Dendritic cell treated with granulocyte-macrophage colony-stimulating factor and Interleukin-4, amounts not matched to agents 40 ng/mL and 50 ng/mL, for 4 days (primary cell): ENCODE measurements at regions of chr5 and their contacts with region 1.

Region 1: GRCh38 chr5:79684782-79685181 is 4.9 kb upstream of the CMYA5 start:
- H3K4me3 Mint-ChIP-seq: no peak overlapping the region
- H3K27ac Mint-ChIP-seq: no peak overlapping the region
- H3K4me1 Mint-ChIP-seq: no peaks in the 10 kb centered on the region
- H3K27me3 Mint-ChIP-seq: no peaks in the 10 kb centered on the region

Region 2: GRCh38 chr5:79628811-79629210 is 56.0 kb before region 1 on chr5:
- intact Hi-C with region 1: loop called (anchors 5 kb)
- H3K4me3 Mint-ChIP-seq: no peak overlapping the region
- H3K27ac Mint-ChIP-seq: no peak overlapping the region
- H3K4me1 Mint-ChIP-seq: peaks cover 24% of the 10 kb centered on the region
- H3K27me3 Mint-ChIP-seq: no peaks in the 10 kb centered on the region

Region 3: GRCh38 chr5:79642212-79642611 is 42.6 kb before region 1 on chr5:
- intact Hi-C with region 1: loop called (anchors 5 kb)
- H3K4me3 Mint-ChIP-seq: no peak overlapping the region
- H3K27ac Mint-ChIP-seq: no peak overlapping the region
- H3K4me1 Mint-ChIP-seq: peaks cover 24% of the 10 kb centered on the region
- H3K27me3 Mint-ChIP-seq: no peaks in the 10 kb centered on the region

Region 4: DNA sequence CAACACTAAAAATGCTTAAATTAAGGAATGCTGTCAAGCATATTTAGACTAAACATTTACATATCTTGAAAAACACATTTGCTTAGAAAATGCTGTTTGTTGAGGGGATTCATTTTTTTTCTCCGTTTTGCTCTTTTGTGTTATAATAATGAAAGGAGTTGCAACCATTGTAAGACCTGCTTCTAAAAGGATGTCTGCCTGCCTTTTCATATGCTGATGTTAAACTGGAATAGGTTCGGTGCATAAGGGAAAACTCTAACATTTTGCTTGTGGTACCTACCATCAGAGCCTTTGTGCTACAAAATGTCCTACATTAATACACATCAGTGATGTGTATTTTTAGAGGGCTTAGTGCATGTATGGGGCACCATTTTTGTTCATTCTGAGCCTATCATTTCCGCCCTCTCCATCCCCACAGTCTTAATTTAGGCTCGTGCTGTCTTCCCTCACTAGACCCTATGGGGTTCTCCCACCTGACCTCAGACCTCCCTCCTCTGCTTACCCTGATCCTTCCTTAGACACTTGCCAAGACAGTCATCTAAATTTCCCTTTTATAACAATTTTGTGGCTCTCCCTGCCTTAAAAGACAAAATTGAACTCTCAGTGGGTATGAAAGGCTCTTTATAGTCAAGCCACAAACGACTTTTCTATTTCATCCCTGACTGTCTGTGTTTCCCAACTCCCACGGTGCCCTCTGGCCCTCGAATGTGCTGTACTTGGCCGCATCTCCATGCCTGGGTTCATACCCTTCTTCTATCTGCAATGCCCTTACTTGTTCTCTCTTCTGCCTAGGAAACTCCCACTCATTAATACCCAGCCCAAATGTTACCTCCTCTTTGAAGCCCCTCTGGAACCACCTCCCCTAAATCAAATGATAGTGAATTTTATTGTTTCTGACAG is 66.1 kb after region 1 on chr5:
- intact Hi-C with region 1: no loop called
- H3K4me3 Mint-ChIP-seq: no peak overlapping the region
- H3K27ac Mint-ChIP-seq: no peak overlapping the region
- H3K4me1 Mint-ChIP-seq: no peaks in the 10 kb centered on the region
- H3K27me3 Mint-ChIP-seq: no peaks in the 10 kb centered on the region